ENCODE measurements at regions of chr5 and their contacts with region 1.

Region 1: DNA sequence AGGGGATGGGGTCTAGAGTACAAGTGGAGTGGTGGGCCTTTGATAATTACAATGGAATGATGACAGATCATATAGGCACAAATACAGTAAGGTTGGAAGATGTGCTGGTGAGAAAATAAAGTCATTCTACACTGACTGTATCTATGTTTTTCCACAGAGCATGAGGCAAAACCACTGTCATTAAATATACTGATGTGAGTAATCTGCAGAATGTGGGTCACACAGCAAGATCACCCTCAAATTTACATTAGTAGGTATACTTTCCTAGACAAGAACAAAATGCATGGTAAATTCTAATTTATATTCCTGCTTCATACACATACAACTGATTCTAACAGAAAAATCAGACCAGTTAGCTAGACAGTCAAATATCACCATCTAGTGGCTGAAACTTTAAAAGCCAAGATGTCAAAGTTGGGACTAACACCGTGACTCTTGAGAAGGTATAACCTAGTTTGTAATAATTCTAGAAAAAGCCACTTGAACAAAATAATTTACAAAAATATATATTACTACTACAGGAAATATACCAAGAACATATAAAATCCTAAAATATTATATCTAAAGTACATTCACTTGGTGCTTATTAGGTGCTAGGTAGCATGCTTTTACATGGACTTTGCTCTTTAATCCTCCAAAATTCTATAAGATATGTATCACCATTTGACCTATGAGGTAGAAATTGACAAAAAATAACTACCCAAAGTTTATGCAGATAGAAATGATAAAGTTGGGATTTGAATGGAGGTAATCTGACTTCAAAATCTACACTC is 19.5 kb downstream of the TTC33 start:
- DNase-seq: no peak
- H3K4me3 Mint-ChIP-seq: no peak overlapping the region
- H3K27ac Mint-ChIP-seq: peak overlapping the region; percentile 17
- H3K4me1 Mint-ChIP-seq: peaks cover 28% of the 10 kb centered on the region
- H3K27me3 Mint-ChIP-seq: no peaks in the 10 kb centered on the region

Region 2: DNA sequence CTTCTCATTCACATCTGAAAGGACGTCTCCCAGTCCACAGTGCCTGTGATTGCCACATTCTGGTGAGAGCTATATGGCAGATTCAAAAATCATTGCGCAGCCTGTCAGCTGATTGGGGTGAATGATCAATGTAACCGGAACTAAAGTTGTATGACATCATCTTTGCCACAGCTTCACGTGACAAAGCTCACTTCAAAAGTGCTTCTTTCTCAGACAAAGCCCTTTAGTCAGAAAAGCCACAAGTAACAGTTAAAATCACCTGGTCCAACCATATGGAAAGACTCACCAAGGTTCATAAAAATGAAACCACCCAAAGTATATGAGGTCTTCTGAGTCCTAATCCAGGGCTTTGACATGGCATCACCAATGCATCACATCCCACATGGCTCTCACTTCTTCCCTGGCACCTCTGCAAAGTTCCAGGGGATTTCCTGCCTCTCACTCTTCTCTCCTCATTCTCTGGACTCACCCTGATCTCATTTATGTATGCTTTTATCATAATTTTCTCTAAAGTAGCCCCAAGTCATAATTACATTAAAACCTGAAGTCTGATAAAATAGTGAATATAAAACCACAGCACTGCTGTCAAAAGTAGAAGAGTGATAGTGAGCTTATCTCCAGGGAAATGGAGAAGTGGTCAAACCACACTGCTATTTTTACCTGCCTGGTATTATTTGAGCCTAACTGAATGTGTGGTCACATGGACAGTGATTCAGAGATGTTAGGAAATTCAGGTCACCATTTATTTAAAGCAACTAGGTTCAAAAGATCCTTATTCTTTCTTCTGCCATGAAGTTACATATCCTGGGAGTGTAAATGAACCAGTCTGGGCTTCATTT is 249.6 kb before region 1 on chr5:
- intact Hi-C with region 1: loop called (anchors 5 kb)
- DNase-seq: peak; percentile 64
- H3K4me3 Mint-ChIP-seq: peak overlapping the region; percentile 19
- H3K27ac Mint-ChIP-seq: peak overlapping the region; percentile 75
- H3K4me1 Mint-ChIP-seq: peaks cover 78% of the 10 kb centered on the region
- H3K27me3 Mint-ChIP-seq: no peaks in the 10 kb centered on the region

Region 3: DNA sequence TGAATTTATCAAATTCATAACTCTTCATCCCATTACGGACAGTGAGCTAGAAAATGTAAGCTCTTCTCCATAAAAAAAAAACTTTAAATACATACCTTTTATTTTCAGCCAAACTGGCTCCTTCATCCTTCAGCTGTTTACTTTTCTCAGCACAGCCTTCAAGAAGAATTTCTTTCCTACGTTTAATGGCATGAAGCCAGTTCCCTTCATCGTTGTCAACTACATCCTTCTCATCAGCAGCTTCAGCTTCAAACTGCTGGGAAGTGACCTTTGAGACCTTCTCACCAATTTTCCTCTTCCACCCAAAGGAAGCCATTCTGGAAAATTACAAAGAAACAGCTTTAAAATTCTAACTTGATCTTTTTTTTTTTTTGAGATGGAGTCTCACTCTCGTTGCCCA is 10.4 kb after region 1 on chr5:
- intact Hi-C with region 1: no loop called
- DNase-seq: no peak
- H3K4me3 Mint-ChIP-seq: no peak overlapping the region
- H3K27ac Mint-ChIP-seq: no peak overlapping the region
- H3K4me1 Mint-ChIP-seq: peaks cover 25% of the 10 kb centered on the region
- H3K27me3 Mint-ChIP-seq: no peaks in the 10 kb centered on the region